GM13977 (cell line): ENCODE measurements at regions of chr1 and their contacts with region 1.

Region 1: DNA sequence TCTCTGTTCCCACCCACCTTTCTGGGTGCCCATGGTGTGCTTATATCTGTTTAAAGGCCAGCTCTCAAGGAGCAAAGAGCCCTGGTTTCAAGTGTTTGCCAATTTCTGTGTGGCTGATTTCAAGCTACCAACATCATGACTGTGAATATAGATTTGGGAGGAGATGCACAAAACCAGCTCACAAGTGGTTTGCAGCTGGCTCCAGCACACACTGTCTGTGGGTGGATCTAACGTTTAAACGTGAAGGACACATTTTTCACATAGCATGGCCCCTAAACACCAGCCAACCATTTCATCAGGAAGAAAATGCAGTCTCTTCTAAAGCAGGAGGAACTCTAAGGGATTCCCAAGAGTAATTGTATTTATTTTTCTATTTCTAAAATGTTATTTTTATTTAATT is 65.2 kb downstream of the FCRL5 start:
- DNase-seq: no peak
- CTCF ChIP-seq: no peak

Region 2: GRCh38 chr1:157193702-157194391 is 293.2 kb before region 1 on chr1:
- in situ Hi-C with region 1: loop called (anchors 10 kb)
- DNase-seq: peak; percentile 70
- CTCF ChIP-seq: peak; percentile 80

Region 3: DNA sequence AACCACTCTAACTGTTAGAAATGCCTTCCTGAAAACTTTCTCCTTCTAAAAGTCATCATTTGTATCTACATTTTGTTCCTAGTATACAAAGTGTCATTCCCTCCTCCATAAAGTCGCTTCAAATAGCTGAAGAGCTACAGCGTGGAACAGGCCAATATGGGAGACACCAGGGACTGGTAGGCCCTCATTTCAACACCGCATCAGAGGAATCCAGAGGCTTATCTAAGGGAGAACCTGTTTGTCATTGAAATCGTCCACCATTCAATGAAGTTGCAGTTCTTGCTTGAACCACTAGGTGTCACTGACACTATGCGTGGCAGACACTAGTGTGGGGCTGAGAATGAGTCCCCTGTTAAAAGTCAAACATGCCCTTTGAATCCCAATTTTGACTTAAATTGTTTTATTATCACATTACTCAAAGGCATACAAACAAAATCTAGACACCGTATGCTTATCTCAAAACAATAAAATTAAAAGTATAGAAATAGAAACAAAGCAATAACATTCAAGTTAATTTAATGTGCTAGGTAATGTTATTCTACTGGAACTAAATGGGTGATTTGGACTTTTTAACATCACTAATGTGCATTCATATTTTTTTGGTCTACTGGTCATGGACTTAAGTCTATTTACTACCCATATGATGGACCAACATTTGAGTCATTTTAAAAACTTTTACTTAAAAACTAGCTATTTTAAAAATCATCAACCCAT is 117.1 kb before region 1 on chr1:
- in situ Hi-C with region 1: loop called (anchors 5 kb)
- DNase-seq: peak; percentile 47
- CTCF ChIP-seq: peak; percentile 80

Region 4: DNA sequence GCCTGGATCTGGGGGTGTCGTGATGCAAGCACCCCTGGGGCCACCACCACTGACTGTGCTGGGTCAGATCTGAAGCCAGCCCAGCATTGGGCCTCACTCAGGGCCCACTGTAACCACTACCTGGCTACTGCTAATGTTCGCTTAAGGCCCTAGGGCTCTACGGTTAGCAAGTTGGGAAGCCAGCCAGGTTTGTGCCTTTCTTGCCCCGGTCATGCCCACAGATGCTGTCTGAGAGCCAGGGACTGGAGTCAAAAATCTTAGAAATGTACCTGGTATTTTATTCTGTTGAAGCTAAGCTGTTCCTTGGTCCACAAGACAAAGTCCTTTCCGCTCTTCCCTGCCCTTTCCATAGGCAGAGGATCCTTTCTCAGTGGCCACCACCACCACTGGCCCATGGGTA is 228.6 kb after region 1 on chr1:
- in situ Hi-C with region 1: no loop called
- DNase-seq: no peak
- CTCF ChIP-seq: no peak